Common myeloid progenitor, CD34-positive (primary cell): ENCODE measurements at regions of chr7 and their contacts with region 1.

Region 1: DNA sequence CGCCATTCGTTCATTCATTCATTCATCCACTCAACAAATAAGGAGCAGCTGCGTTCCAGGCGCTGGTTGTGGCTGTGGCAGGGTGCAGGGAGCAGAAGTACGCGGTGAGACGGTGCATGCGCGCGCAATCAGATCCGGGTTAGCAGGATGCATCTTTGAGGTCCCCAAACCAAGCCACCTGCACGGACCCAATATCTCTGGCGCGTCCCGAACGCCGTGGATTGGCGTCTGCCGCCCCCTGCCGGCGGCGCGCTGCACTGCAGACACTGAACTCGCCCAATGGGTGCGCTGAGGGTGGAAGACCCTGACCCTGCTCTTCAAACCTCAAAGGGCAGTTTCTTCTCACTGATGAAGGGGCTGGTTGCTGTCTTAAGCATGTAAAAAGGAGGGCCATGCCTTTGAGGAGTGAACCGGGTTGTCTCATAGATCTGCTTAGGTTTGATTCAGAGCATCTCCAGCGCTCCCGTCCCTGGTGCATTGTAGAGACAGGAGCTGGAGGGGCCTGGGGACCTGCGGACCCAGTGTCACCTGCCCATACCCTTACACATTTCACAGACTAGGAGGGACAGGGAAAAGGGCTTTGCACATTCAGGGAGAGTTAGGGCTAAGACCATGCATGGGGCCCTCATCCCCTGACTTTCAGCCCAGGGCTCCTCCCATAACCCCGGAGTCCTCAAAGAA is 102.5 kb downstream of the RAMP3 start:
- DNase-seq: peak; percentile 44 to 63 (median 63)
- H3K4me3 ChIP-seq: no peak overlapping the region
- H3K27ac ChIP-seq: no peak overlapping the region
- H3K4me1 ChIP-seq: no peaks in the 10 kb centered on the region
- H3K27me3 ChIP-seq: peaks cover 0 to 10% (median 5%) of the 10 kb centered on the region in 5 experiments

Region 2: DNA sequence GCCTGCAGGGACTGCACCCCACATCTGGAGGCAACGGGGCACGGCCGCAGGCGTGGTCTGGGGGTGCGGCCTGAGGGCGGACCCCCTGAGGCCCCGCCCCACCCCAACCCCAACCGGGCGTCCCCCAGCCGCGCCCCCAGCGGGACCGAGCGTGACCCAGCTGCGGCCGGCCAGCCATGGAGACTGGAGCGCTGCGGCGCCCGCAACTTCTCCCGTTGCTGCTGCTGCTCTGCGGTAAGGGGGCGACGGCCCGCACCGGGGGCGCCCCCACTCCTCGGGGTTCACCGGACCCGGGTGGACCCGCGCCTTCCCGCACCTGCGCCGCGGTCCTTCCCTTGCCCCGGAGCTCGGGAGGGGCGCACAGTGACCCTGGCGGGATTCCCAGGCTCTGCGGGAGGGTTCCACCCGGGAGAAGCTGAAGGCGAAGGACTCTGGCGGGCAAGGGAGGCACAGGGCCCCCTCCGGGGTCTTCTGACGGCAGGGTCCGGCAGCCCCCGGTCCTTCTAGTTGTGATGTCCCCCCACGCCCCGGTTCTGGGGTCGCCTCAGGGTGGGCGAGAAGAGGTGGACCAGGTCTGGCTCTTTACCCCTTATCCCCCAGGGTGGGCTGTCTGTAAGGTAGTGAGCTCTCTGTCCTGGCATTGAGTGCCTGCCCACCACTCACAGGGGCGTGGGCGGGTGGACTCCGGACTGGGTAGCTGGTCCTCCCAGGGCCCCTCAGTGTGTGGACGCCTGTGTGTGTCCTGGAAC is 102.3 kb before region 1 on chr7 and contains the start of gene RAMP3:
- CTCF ChIA-PET with region 1: interaction called, 57 read pairs
- POLR2A ChIA-PET with region 1: no interaction called
- DNase-seq: peak in 2 of 3 donors; percentile 37 to 47
- H3K4me3 ChIP-seq: peak within 1 kb of the TSS in 3 of 7 experiments; percentile 32 to 48 (median 38)
- H3K27ac ChIP-seq: no peak within 1 kb of the TSS
- H3K4me1 ChIP-seq: peaks cover 2 to 20% (median 14%) of the 10 kb centered on the region in 4 experiments
- H3K27me3 ChIP-seq: peaks cover 0 to 38% (median 25%) of the 10 kb centered on the region in 5 experiments

Region 3: DNA sequence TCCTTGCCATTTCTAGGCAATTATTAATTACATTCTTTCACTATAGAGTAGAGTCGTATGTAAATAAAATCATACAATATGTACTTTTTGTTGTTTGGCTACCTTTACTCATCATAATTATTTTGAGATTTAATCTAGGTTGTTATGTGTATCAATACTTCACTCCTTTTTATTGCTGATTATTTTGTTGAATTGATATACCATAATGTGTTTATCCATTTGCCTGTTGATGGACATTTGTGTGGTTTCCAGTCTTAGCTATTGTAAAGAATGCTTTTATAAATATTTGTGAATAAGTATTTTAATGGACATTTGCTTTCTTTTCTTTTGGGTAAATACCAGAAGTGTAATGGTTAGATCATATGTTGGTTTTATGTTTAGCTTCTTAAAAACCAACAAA is 71.5 kb after region 1 on chr7:
- CTCF ChIA-PET with region 1: no interaction called
- POLR2A ChIA-PET with region 1: no interaction called
- DNase-seq: no peak
- H3K4me3 ChIP-seq: no peak overlapping the region
- H3K27ac ChIP-seq: no peak overlapping the region
- H3K4me1 ChIP-seq: peaks cover 0 to 4% (median 0%) of the 10 kb centered on the region in 4 experiments
- H3K27me3 ChIP-seq: no peaks in the 10 kb centered on the region